Right ventricle myocardium superior (tissue), 1 donor: ENCODE measurements at regions of chr15 and their contacts with region 1.

Region 1: DNA sequence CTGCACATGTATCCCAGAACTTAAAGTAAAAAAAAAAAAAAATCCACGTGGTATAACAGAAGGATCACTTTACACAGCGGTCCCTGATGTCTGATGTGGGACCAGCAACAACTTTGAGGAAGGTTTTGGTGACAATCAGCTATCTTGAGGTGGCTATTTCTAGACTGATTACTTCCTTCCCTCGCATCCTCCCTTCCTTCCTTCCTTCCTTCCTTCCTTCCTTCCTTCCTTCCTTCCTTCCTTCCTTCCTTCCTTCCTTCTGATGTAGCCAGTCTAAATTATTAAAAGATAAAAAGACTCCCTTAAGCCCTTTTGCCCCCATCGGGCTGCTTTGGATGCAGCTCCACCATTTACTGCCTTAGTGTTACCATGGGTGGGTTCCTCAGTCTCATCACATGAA is 14.9 kb downstream of the SORD start:
- DNase-seq: no peak
- ATAC-seq: no peak

Region 2: GRCh38 chr15:44968475-44968874 is 69.5 kb before region 1 on chr15:
- intact Hi-C with region 1: loop called (anchors 5 kb)
- DNase-seq: no peak
- ATAC-seq: no peak

Region 3: DNA sequence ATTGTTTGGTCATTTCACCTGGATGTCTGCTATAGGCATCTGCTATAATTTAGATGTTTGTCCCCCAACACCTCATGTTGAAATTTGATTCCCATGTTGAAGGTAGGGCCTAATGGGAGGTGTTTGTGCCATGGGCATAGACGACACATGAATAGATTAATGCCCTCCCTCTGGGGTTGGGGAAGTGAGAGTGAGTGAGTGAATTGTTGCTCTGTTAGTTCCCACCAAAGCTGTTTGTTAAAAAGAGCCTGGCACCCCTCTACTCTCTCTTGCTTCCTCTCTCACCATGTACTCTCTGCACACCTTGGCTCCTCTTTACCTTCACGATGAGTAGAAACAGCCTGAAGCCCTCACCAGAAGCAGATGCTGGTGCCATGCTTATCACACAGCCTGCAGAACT is 38.8 kb before region 1 on chr15:
- intact Hi-C with region 1: no loop called
- DNase-seq: no peak
- ATAC-seq: no peak